HepG2 (cell line): ENCODE measurements at regions of chr17 and their contacts with region 1.

Region 1: GRCh38 chr17:27559506-27560481 is 71.2 kb upstream of the LGALS9 start:
- DNase-seq: peak; percentile 62
- ATAC-seq: peak; percentile 66
- H3K4me3 ChIP-seq: peak overlapping the region; percentile 22 to 68 (median 24); a peak in 5 of 6 replicates
- H3K27ac ChIP-seq: peak overlapping the region; percentile 75
- H3K4me1 ChIP-seq: peaks cover 49% of the 10 kb centered on the region
- H3K27me3 ChIP-seq: no peaks in the 10 kb centered on the region
- CTCF ChIP-seq: peak; percentile 2; the same call in 1 of the 2 replicates
- EP300 ChIP-seq: no peak
- POLR2A ChIP-seq: no peak
- RAD21 ChIP-seq: no peak

Region 2: GRCh38 chr17:27455914-27456680 is 103.7 kb before region 1 on chr17 and contains the start of gene KSR1:
- CTCF ChIA-PET with region 1: no interaction called
- POLR2A ChIA-PET with region 1: interaction called, 9 read pairs
- in situ Hi-C with region 1: no loop called
- intact Hi-C with region 1: loop called (anchors 1 kb)
- DNase-seq: peak; percentile 60
- ATAC-seq: peak; percentile 80
- H3K4me3 ChIP-seq: peak within 1 kb of the TSS; percentile 83 to 87 (median 84)
- H3K27ac ChIP-seq: peak within 1 kb of the TSS; percentile 82
- H3K4me1 ChIP-seq: peaks cover 40% of the 10 kb centered on the region
- H3K27me3 ChIP-seq: peaks cover 2 to 21% of the 10 kb centered on the region in 2 experiments; a peak in 3 of 5 replicates
- CTCF ChIP-seq: peak; percentile 77
- EP300 ChIP-seq: no peak
- POLR2A ChIP-seq: peak; percentile 43 to 76; a peak in 2 of 4 replicates
- RAD21 ChIP-seq: peak; percentile 71
- total RNA-seq, gene KSR1: 8.0 and 10.1 TPM in 2 replicates

Region 3: GRCh38 chr17:27504188-27504995 is 55.4 kb before region 1 on chr17:
- CTCF ChIA-PET with region 1: no interaction called
- POLR2A ChIA-PET with region 1: no interaction called
- in situ Hi-C with region 1: loop called (anchors 5 kb)
- intact Hi-C with region 1: loop called (anchors 2 kb)
- DNase-seq: peak; percentile 64
- ATAC-seq: peak; percentile 94
- H3K4me3 ChIP-seq: peak overlapping the region in 1 of 3 experiments; percentile 31; a peak in 2 of 6 replicates
- H3K27ac ChIP-seq: peak overlapping the region; percentile 43
- H3K4me1 ChIP-seq: peaks cover 37% of the 10 kb centered on the region
- H3K27me3 ChIP-seq: no peaks in the 10 kb centered on the region
- CTCF ChIP-seq: no peak
- EP300 ChIP-seq: no peak
- POLR2A ChIP-seq: no peak
- RAD21 ChIP-seq: no peak

Region 4: DNA sequence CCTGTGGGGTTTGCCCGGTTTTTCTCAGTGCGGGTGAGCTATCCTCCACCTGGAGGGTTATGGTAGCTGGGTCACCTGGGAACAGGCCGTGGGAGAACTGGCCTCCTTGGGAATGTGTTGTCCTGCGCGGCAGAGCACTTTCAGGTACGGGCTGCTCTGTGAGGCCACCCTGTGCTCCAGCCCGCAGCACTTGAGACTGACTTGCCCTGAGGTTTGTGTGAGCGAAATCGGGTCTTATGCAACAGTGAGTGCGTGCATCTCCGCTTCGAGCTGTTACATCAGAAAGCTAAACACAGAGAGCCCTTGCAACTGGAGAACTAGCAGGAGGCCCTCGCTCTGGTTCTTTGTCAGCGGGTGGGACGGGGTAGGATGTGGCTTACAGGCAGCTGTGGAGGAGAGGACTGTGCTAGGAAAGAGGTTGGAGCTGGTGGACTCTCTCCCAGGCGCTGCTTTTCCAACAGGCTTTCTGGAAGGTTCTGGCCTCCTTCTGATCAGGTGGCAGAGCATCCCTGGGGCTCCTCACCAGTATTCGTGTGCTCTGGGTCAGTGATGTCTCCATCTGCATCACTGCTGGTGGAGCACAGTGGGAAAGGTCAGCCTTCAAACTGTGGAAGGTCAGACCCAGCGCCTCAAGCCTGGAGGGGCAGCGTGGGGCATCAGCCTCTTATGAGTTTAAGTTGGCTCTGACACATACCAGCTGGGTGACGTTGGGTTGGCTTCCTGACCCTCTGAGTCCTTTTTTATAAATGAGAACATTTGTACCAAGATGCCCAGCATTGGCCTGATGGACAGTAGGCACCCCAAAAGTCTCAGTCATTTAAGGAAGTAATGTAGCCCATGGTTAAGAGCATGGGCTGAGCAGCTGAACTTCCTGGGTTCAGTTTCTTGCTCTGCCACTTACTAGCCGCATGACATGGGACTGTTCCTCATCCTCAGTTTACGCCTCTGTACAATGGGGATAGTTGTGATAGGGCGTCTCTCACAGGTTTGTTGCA is 27.2 kb before region 1 on chr17:
- CTCF ChIA-PET with region 1: no interaction called
- POLR2A ChIA-PET with region 1: interaction called, 14 read pairs
- in situ Hi-C with region 1: no loop called
- intact Hi-C with region 1: loop called (anchors 1 kb)
- DNase-seq: peak; percentile 88
- ATAC-seq: peak; percentile 84
- H3K4me3 ChIP-seq: peak overlapping the region; percentile 13 to 55 (median 17); a peak in 4 of 6 replicates
- H3K27ac ChIP-seq: peak overlapping the region; percentile 25
- H3K4me1 ChIP-seq: peaks cover 84% of the 10 kb centered on the region
- H3K27me3 ChIP-seq: no peaks in the 10 kb centered on the region
- CTCF ChIP-seq: peak; percentile 13; the same call in 1 of the 2 replicates
- EP300 ChIP-seq: peak in 1 of 2 experiments; percentile 71; a peak in 2 of 4 replicates
- POLR2A ChIP-seq: no peak
- RAD21 ChIP-seq: no peak

Region 5: DNA sequence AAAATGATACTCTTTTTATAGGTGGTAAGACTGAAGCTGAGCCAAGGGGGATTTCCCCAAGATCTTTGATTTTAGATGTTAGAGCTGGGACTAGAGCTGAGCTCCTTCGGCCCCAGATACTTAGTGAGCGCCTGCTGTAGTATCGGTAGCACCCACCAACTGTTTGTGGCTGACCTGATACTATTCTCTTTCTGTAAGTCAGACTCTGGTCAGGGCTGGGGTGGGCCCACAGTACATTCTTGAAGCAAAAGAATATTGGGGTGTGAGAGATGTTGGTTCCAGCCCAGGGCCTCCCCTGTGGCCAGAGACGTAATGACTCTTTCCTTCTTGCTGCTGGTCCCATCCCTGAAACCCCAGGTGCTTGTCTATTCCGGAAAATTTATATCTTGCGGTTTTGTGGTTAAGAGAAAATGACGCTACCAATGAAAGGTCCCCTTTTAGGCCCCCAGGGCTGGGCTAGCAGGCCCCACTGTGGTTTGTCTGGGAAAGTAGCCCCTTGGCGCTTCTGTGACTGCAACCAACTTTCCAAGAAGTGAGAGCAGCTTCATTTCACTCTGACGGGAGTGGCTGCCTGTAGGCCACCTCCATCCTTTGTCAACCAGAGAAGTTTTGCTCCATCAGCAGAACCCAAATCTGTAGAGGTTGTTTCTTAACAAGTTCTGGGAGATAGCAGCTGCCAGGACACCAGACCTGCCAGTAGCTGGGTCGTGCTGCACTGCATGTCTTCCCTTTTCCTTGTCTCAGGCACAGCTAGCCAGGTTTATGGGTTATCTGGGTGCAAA is 15.3 kb before region 1 on chr17:
- CTCF ChIA-PET with region 1: no interaction called
- POLR2A ChIA-PET with region 1: interaction called, 10 read pairs
- in situ Hi-C with region 1: no loop called
- intact Hi-C with region 1: no loop called
- DNase-seq: no peak
- ATAC-seq: no peak
- H3K4me3 ChIP-seq: no peak overlapping the region
- H3K27ac ChIP-seq: no peak overlapping the region
- H3K4me1 ChIP-seq: peaks cover 70% of the 10 kb centered on the region
- H3K27me3 ChIP-seq: no peaks in the 10 kb centered on the region
- CTCF ChIP-seq: no peak
- EP300 ChIP-seq: no peak
- POLR2A ChIP-seq: no peak
- RAD21 ChIP-seq: no peak

Region 6: GRCh38 chr17:27593232-27593856 is 33.5 kb after region 1 on chr17:
- CTCF ChIA-PET with region 1: no interaction called
- POLR2A ChIA-PET with region 1: no interaction called
- in situ Hi-C with region 1: no loop called
- intact Hi-C with region 1: no loop called
- DNase-seq: no peak
- ATAC-seq: peak; percentile 32; the same call in 1 of the 3 replicates
- H3K4me3 ChIP-seq: no peak overlapping the region
- H3K27ac ChIP-seq: no peak overlapping the region
- H3K4me1 ChIP-seq: no peaks in the 10 kb centered on the region
- H3K27me3 ChIP-seq: no peaks in the 10 kb centered on the region
- CTCF ChIP-seq: peak; percentile 24; the same call in 1 of the 2 replicates
- EP300 ChIP-seq: no peak
- POLR2A ChIP-seq: no peak
- RAD21 ChIP-seq: no peak